ENCODE measurements at regions of chr9 and their contacts with region 1.

Region 1: DNA sequence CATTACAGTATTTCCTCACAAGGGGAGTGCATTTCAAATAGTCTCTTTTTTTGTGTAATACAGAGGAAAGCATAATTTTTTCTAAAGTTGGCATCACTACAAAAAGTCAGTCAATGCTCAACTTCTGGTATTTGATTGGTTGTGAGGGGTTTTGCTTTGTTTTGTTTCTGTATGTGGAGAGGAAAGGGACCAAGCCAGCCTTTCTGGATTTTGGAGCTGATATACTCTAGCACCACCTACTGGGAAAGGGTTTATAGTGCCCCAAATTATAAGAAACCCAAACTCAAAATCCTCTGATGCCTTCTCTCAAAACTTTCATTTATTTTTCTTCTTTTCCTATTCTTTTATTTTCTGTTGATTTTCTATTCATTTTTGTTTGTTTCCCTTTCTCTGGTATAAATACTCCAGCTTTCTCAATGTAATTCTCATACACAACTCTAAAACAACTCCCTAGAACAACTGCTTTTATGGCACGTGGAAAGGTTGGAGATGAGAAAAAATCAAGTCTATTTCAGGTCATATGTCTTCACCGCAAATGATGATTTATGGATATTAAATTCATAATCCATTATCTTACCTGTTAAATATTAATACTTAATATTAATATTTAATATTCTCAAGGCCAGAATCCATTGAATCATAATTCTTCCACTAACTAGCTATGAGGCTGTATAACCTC is 69.5 kb upstream of the ANXA1 start:
- DNase-seq: no peak
- H3K4me3 ChIP-seq: no peak overlapping the region
- H3K27ac ChIP-seq: no peak overlapping the region
- H3K4me1 ChIP-seq: peaks cover 0 to 7% (median 0%) of the 10 kb centered on the region in 4 experiments; a peak in 1 of 7 replicates
- H3K27me3 ChIP-seq: no peaks in the 10 kb centered on the region
- CTCF ChIP-seq: peak in 2 of 3 experiments; percentile 69; a peak in 3 of 4 replicates
- EP300 ChIP-seq: no peak
- POLR2A ChIP-seq: no peak
- RAD21 ChIP-seq: peak; percentile 79 to 82

Region 2: GRCh38 chr9:72856972-72857623 is 225.0 kb before region 1 on chr9:
- CTCF ChIA-PET with region 1: interaction called, 43 read pairs
- POLR2A ChIA-PET with region 1: no interaction called
- DNase-seq: no peak
- H3K4me3 ChIP-seq: no peak overlapping the region
- H3K27ac ChIP-seq: no peak overlapping the region
- H3K4me1 ChIP-seq: peaks cover 0 to 2% (median 1%) of the 10 kb centered on the region in 4 experiments; a peak in 3 of 7 replicates
- H3K27me3 ChIP-seq: no peaks in the 10 kb centered on the region
- CTCF ChIP-seq: peak in 2 of 3 experiments; percentile 45 to 54; a peak in 2 of 4 replicates
- EP300 ChIP-seq: no peak
- POLR2A ChIP-seq: no peak
- RAD21 ChIP-seq: peak; percentile 58 to 67

Region 3: GRCh38 chr9:72871685-72872084 is 210.4 kb before region 1 on chr9:
- CTCF ChIA-PET with region 1: interaction called, 17 read pairs
- POLR2A ChIA-PET with region 1: no interaction called
- DNase-seq: no peak
- H3K4me3 ChIP-seq: no peak overlapping the region
- H3K27ac ChIP-seq: no peak overlapping the region
- H3K4me1 ChIP-seq: peaks cover 0 to 3% (median 1%) of the 10 kb centered on the region in 4 experiments; a peak in 3 of 7 replicates
- H3K27me3 ChIP-seq: no peaks in the 10 kb centered on the region
- CTCF ChIP-seq: peak in 2 of 3 experiments; percentile 21 to 37; a peak in 2 of 4 replicates
- EP300 ChIP-seq: no peak
- POLR2A ChIP-seq: no peak
- RAD21 ChIP-seq: peak; percentile 55 to 61

Region 4: DNA sequence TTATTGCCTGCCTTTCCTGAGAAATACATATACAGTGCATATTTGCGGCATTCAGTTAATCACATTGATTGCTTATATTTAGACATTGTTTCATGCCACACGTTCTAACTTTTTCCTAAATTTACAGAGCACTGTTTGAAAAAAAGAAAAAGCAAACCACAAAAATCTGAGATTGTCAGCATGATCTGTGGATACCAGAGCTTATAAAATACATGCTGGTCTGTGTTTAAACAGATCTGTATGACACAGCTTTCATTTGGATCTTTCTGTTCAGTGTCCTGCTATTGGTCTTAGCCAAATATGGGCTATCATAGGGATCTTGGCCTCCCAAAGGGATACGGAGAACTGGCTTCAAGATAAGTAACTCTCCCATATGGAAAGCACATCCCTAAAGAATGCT is 149.5 kb before region 1 on chr9:
- CTCF ChIA-PET with region 1: no interaction called
- POLR2A ChIA-PET with region 1: no interaction called
- DNase-seq: no peak
- H3K4me3 ChIP-seq: no peak overlapping the region
- H3K27ac ChIP-seq: no peak overlapping the region
- H3K4me1 ChIP-seq: no peaks in the 10 kb centered on the region
- H3K27me3 ChIP-seq: no peaks in the 10 kb centered on the region
- CTCF ChIP-seq: no peak
- EP300 ChIP-seq: no peak
- POLR2A ChIP-seq: no peak
- RAD21 ChIP-seq: no peak

Region 5: GRCh38 chr9:73067074-73067473 is 15.0 kb before region 1 on chr9:
- CTCF ChIA-PET with region 1: interaction called, 16 read pairs
- POLR2A ChIA-PET with region 1: no interaction called
- DNase-seq: no peak
- H3K4me3 ChIP-seq: no peak overlapping the region
- H3K27ac ChIP-seq: no peak overlapping the region
- H3K4me1 ChIP-seq: no peaks in the 10 kb centered on the region
- H3K27me3 ChIP-seq: no peaks in the 10 kb centered on the region
- CTCF ChIP-seq: peak; percentile 33 to 64 (median 38)
- EP300 ChIP-seq: no peak
- POLR2A ChIP-seq: no peak
- RAD21 ChIP-seq: peak; percentile 32 to 34; a peak in 3 of 4 replicates

Region 6: GRCh38 chr9:73093740-73094379 is 11.7 kb after region 1 on chr9:
- CTCF ChIA-PET with region 1: interaction called, 12 read pairs
- POLR2A ChIA-PET with region 1: no interaction called
- DNase-seq: no peak
- H3K4me3 ChIP-seq: no peak overlapping the region
- H3K27ac ChIP-seq: no peak overlapping the region
- H3K4me1 ChIP-seq: no peaks in the 10 kb centered on the region; a peak in 1 of 7 replicates
- H3K27me3 ChIP-seq: no peaks in the 10 kb centered on the region
- CTCF ChIP-seq: no peak
- EP300 ChIP-seq: no peak
- POLR2A ChIP-seq: no peak
- RAD21 ChIP-seq: no peak

Region 7: DNA sequence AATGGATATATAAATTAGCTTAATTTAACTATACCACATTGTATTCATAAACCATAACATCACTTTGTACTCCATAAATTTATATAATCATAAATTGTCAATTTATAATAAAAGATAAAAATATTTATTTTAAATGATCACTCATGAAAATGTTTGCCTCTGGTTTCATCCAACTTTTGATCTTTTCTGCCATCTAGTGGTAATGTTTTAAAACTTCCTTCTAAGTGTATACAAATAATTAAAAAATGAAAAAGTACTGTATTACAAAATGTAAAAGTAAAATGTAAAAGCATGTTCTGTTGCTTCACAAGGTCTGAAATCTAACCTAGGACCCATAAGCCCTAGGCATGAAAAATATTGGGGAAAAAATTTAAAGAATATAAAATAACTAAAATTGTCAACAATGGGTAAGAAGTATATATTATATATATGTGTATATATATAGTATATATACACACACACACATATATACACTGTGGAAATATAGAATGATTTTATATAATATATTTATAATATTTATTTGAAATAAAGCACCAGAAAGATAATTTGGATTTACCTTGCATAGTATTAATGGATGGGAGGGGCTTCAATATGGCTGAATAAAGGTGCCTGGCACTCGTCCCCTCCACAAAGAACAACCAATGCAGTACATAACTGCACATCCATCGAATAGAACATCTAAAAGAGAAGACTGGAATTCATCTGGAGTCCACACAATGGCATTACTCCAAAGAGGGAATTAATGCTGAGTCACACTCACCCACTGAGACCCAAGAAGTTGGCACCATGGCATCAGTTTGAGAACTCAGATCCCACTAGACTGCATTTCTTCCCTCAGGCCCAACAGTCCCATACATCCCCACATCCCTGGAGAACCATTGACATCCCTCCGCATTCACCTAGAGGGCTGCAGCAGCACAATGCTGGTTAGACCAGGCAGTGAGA is 102.1 kb after region 1 on chr9:
- CTCF ChIA-PET with region 1: interaction called, 20 read pairs
- POLR2A ChIA-PET with region 1: no interaction called
- DNase-seq: no peak
- H3K4me3 ChIP-seq: no peak overlapping the region
- H3K27ac ChIP-seq: no peak overlapping the region
- H3K4me1 ChIP-seq: no peaks in the 10 kb centered on the region
- H3K27me3 ChIP-seq: no peaks in the 10 kb centered on the region
- CTCF ChIP-seq: peak in 1 of 3 experiments; percentile 31; a peak in 1 of 4 replicates
- EP300 ChIP-seq: no peak
- POLR2A ChIP-seq: no peak
- RAD21 ChIP-seq: peak in 1 of 2 experiments; percentile 64

Region 8: DNA sequence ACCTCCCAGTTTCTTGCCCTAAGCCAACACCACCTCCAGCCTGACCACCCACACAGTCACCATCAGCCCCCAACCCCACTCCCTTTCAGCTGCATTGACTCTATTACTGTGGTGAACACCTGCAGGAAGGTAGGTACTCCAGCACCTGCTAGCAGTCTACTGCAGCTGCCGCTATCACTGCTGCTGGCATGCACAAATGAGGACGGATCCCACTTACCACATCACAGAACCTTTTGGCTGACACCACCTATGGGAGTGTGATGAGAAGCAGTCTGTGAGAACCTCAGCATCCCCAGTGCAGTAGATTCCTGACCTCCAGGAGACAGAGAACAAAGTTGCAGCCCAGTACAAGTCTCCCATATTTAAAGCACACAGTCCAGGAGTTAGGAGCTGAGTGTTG is 141.5 kb after region 1 on chr9:
- CTCF ChIA-PET with region 1: no interaction called
- POLR2A ChIA-PET with region 1: no interaction called
- DNase-seq: no peak
- H3K4me3 ChIP-seq: no peak overlapping the region
- H3K27ac ChIP-seq: no peak overlapping the region
- H3K4me1 ChIP-seq: no peaks in the 10 kb centered on the region
- H3K27me3 ChIP-seq: no peaks in the 10 kb centered on the region
- CTCF ChIP-seq: no peak
- EP300 ChIP-seq: no peak
- POLR2A ChIP-seq: no peak
- RAD21 ChIP-seq: no peak